Activated T-helper 1 cell treated with anti-CD3 and anti-CD28 coated beads, Interleukin-12 subunit alpha, Interleukin-12 subunit beta, Interleukin-2, Interleukin-4 antibody, amounts not matched to agents 30 ng/mL and 10 ng/mL and 1 ng/mL, durations not matched to agents 14 hours and 24 hours and 36 hours (primary cell): ENCODE measurements at regions of chr9 and their contacts with region 1.

Region 1: DNA sequence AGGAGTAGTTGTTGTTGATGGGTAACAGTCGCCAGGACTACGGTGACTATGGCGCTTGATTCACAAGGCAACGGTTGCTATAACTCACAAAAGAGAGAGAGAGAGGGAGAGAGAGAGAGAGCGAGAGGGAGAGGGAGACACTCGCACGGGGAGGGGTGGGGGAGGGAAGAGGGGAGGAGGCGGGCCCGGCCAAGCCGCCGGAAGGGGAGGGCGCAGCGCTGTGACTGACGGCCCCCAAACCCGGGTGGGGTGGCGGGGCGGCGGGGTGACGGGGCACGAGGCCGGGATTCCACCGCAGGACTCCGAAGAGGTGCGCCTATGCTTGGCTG is at the start of gene RFX3:
- DNase-seq: peak; percentile 83
- H3K4me3 Mint-ChIP-seq: peak within 1 kb of the TSS; percentile 87
- H3K27ac Mint-ChIP-seq: peak within 1 kb of the TSS; percentile 99
- H3K4me1 Mint-ChIP-seq: peaks cover 63% of the 10 kb centered on the region
- H3K27me3 Mint-ChIP-seq: peaks cover 2% of the 10 kb centered on the region
- total RNA-seq, gene RFX3: 11.2 and 11.3 TPM in 2 replicates

Region 2: DNA sequence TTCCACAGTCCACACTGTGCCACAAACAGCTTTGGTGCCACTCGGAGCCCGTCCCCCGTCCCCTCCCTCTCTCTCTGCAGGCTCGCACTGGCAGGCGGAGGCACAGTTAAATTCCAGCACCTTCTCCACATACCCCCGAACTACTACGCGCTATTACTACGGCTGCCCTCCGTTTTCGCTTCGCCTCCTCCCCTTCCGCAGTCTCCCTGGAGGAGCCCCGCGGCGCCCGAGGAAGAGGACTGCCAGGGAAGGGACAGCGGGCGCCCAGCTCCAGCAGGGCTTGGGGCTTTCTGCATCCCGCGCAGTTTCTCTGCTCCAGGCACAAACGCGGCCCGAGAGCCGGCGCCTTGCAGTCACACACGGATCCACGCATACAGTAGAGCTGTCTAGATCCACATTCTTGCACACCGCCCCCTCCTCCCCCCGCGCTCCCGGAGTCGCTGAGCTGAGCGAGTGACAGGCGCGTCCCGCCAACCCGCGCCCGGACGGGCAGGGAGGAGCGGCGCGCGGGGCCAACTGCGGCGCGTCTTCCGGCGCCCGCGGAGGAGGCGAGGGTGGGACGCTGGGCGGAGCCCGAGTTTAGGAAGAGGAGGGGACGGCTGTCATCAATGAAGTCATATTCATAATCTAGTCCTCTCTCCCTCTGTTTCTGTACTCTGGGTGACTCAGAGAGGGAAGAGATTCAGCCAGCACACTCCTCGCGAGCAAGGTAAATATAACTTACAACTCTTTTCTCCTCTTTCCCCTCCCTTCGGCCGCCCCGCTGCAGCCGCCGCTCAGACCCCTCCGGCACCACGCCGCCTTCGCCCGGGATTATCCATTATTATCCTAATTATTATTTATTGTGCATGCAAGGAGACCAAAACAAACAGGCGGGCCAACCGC is 1510.9 kb before region 1 on chr9 and contains the start of gene SMARCA2:
- intact Hi-C with region 1: loop called (anchors 2 kb)
- DNase-seq: peak; percentile 97
- H3K4me3 Mint-ChIP-seq: peak within 1 kb of the TSS; percentile 99
- H3K27ac Mint-ChIP-seq: peak within 1 kb of the TSS; percentile 99
- H3K4me1 Mint-ChIP-seq: peaks cover 44% of the 10 kb centered on the region
- H3K27me3 Mint-ChIP-seq: peaks cover 5% of the 10 kb centered on the region
- total RNA-seq, gene SMARCA2: 105 and 108 TPM in 2 replicates

Region 3: DNA sequence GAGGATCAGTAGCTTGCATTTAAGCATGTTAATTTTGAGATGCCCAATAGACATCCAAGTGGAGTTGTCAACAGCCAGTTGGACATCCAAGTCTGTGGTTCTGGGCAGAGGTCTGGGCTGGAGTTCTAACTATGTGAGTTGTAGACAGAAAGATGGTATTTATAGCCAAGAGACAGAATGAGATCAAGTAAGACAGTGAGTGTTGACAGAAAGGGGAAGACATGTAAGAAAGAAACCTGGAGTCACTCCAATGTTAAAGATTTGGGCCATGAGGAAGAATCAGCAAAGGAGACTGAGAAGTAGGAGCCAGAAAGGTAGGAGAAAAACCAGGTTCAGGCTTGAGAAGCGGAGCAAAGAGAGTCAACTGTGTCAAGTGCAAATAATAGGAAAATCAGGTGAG is 586.4 kb before region 1 on chr9:
- intact Hi-C with region 1: no loop called
- DNase-seq: no peak
- H3K4me3 Mint-ChIP-seq: no peak overlapping the region
- H3K27ac Mint-ChIP-seq: no peak overlapping the region
- H3K4me1 Mint-ChIP-seq: no peaks in the 10 kb centered on the region
- H3K27me3 Mint-ChIP-seq: peaks cover 7% of the 10 kb centered on the region

Region 4: GRCh38 chr9:3385871-3386270 is 139.9 kb before region 1 on chr9:
- intact Hi-C with region 1: loop called (anchors 1 kb)
- DNase-seq: peak; percentile 19
- H3K4me3 Mint-ChIP-seq: no peak overlapping the region
- H3K27ac Mint-ChIP-seq: peak overlapping the region; percentile 64
- H3K4me1 Mint-ChIP-seq: peaks cover 28% of the 10 kb centered on the region
- H3K27me3 Mint-ChIP-seq: no peaks in the 10 kb centered on the region

Region 5: GRCh38 chr9:3508521-3509291 is 17.1 kb before region 1 on chr9:
- intact Hi-C with region 1: loop called (anchors 2 kb)
- DNase-seq: no peak
- H3K4me3 Mint-ChIP-seq: no peak overlapping the region
- H3K27ac Mint-ChIP-seq: no peak overlapping the region
- H3K4me1 Mint-ChIP-seq: peaks cover 34% of the 10 kb centered on the region
- H3K27me3 Mint-ChIP-seq: no peaks in the 10 kb centered on the region

Region 6: GRCh38 chr9:4297151-4297785 is 771.5 kb after region 1 on chr9:
- intact Hi-C with region 1: loop called (anchors 2 kb)
- DNase-seq: peak; percentile 11
- H3K4me3 Mint-ChIP-seq: peak overlapping the region; percentile 95
- H3K27ac Mint-ChIP-seq: peak overlapping the region; percentile 91
- H3K4me1 Mint-ChIP-seq: peaks cover 45% of the 10 kb centered on the region
- H3K27me3 Mint-ChIP-seq: peaks cover 42% of the 10 kb centered on the region

Region 7: DNA sequence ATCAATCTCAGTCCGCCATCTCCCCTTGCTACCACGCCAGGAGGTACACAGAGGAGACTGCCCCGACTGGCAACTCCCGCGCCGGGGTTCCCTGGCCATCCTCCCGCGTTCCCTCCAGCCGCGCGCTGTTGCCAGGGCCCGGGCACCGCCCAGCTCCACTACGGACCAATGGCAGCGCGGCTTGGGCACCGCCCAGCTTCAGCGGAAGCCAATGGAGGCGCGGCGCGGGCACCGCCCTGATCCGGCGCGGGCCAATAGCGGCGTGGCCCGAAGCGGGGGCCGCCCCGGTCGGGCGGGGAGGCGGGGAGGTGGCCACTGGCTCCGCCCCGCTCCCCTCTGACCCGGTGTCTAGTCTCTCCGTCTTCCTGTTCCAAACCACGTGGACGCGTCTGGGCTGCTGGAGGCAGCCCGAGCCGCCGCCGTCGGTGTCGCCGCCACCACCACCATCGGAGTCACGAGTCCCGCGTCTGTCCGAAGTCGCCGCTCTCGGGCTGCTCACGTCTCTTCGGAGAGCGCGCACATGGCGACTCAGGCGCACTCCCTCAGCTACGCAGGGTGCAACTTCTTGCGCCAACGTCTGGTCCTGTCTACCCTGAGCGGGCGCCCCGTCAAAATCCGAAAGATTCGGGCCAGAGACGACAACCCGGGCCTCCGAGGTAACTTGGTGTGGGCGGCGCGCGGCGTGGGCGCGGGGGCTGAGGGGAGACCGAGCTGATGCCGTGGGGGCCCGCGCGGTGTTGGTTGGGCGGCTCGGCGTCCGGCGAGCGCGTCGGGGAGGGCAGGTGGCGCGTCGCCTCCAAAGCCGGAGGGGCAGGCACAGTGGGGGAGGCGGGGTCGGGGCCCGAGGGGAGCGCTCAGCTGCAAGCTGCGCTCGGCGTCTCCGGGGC is 1267.0 kb after region 1 on chr9 and contains the start of gene RCL1:
- intact Hi-C with region 1: loop called (anchors 2 kb)
- DNase-seq: peak; percentile 99
- H3K4me3 Mint-ChIP-seq: peak within 1 kb of the TSS; percentile 96
- H3K27ac Mint-ChIP-seq: peak within 1 kb of the TSS; percentile 96
- H3K4me1 Mint-ChIP-seq: peaks cover 62% of the 10 kb centered on the region
- H3K27me3 Mint-ChIP-seq: no peaks in the 10 kb centered on the region
- total RNA-seq, gene RCL1: 53.3 and 53.4 TPM in 2 replicates